Upper lobe of right lung (tissue), 1 donor: ENCODE measurements at regions of chr1 and their contacts with region 1.

Region 1: DNA sequence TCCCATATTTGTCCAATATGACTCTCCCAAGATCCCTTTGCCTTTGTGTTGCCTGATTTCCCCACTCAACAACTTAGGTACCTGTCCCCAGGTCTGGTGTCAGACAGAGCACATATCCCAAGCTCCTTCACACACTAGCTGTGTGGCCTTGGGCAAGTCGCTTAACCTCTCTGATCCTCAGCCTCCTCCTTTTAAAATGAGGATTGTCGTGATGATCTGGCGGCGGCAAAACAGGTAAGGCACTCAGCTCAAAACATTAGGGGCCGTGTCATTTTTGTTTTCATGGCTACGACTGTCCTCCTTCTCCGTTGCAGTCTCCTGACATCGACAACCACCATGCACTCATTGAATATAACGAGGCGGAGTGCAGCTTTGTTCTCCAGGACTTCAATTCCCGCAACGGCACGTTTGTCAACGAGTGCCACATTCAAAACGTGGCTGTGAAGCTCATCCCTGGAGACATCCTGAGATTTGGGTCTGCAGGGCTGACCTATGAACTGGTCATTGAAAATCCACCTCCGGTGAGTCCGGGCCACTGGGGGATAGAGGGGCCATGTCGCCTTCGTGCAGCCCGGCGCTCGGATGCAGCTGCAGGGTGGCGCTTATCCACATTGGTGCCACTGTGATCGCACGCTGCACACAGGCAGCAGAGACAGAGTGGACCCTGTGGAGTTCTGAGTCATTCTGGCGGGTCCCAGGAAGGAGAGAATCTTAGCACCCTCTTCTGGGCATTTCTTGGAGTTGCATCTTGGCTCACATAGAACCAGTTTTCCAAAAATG is 25.2 kb downstream of the FHAD1 start:
- DNase-seq: peak; percentile 72
- ATAC-seq: peak; percentile 95
- H3K4me3 ChIP-seq: no peak overlapping the region
- H3K27ac ChIP-seq: no peak overlapping the region
- H3K4me1 ChIP-seq: peaks cover 6% of the 10 kb centered on the region
- H3K27me3 ChIP-seq: peaks cover 3% of the 10 kb centered on the region
- CTCF ChIP-seq: peak; percentile 77

Region 2: GRCh38 chr1:15128520-15129313 is 143.5 kb before region 1 on chr1:
- intact Hi-C with region 1: loop called (anchors 10 kb)
- DNase-seq: peak; percentile 83
- ATAC-seq: peak; percentile 97
- H3K4me3 ChIP-seq: no peak overlapping the region
- H3K27ac ChIP-seq: no peak overlapping the region
- H3K4me1 ChIP-seq: no peaks in the 10 kb centered on the region
- H3K27me3 ChIP-seq: no peaks in the 10 kb centered on the region
- CTCF ChIP-seq: peak; percentile 92

Region 3: GRCh38 chr1:15152318-15153183 is 119.6 kb before region 1 on chr1:
- intact Hi-C with region 1: loop called (anchors 10 kb)
- DNase-seq: peak; percentile 92
- ATAC-seq: peak; percentile 76
- H3K4me3 ChIP-seq: peak overlapping the region; percentile 59
- H3K27ac ChIP-seq: peak overlapping the region; percentile 91
- H3K4me1 ChIP-seq: peaks cover 15% of the 10 kb centered on the region
- H3K27me3 ChIP-seq: no peaks in the 10 kb centered on the region
- CTCF ChIP-seq: peak; percentile 58

Region 4: DNA sequence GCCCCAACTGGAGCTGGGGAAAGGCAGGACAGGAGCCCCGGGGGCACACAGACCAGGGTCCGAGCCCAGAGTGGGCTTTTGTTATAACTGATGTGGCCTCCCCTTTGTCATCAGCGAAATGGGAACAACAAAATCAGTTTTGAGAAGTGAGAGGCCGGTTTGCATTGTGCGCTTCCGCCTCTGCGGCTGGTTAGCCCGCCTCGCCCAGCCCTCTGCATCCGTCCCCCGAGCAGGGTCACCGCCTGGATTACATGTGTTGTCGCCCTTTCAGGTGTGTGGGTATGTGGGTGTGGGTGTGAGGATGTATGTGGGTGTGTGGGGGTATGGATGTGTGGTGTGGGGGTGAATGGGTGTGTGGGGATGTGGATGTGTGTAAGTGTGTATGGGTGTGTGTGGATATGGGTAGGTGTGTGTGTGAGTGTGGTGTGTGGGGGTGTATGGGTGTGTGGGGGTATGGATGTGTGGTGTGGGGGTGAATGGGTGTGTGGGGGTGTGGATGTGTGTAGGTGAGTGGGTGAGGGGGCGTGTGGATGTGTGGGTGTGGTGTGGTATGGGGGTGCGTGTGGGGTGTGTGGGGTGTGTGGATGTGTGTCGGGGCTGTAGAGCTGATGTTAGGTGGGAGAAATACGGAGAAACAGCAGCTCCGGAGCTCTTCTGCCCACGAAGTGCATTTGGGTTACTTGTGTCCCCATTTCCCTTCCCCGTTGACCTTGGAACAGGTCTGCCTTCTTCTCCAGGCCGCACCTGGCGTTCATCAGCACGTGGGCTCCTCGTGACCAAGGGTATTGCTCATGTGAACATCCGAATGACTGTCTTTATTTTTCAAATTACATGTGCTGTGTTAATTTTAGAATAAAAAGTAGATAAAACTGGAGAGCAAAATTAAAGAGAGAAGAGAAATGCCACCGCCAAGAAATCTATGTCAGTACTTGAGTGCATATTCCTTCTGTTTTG is 42.4 kb after region 1 on chr1:
- intact Hi-C with region 1: no loop called
- DNase-seq: no peak
- ATAC-seq: peak; percentile 45
- H3K4me3 ChIP-seq: no peak overlapping the region
- H3K27ac ChIP-seq: no peak overlapping the region
- H3K4me1 ChIP-seq: no peaks in the 10 kb centered on the region
- H3K27me3 ChIP-seq: no peaks in the 10 kb centered on the region
- CTCF ChIP-seq: no peak

Region 5: DNA sequence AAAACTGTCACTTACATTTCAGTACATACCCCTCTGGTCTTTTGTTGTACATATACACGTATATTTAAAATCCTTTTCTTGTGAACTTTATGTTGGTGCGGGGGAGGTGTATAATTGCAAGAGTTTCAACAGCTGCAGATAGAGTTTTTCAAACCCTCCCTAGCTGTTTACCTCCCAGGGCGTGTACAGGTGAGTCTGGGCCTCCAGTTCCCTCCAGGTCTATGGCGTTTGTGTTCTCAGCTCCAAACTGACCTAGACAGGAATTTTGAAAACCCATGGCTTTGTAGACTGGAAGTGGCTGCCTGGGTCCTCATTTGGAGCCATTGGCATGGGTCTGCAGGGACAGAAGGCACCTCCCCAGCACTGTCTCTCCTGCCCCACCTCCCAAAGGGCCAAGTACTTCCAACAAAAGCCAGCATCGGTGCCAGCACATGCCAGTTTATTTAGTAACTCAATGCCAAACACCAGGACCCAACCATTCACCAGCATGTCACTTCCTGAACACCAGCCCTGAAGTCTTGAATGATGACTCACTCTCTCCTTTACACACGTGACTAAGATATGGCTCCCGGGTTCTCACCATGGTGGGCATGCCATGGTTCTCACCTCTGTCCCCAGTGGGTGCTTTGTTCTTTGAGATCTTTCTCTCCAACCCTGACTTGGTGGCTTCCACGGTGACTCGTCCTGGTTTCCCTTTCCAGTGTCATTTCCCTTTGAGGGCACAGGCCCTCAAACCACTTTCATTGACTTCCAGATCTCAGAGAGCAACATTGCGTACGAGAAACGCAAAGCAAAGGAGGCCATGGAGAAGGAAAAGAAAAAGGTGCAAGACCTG is 80.1 kb after region 1 on chr1:
- intact Hi-C with region 1: no loop called
- DNase-seq: no peak
- ATAC-seq: peak; percentile 61
- H3K4me3 ChIP-seq: no peak overlapping the region
- H3K27ac ChIP-seq: no peak overlapping the region
- H3K4me1 ChIP-seq: peaks cover 6% of the 10 kb centered on the region
- H3K27me3 ChIP-seq: no peaks in the 10 kb centered on the region
- CTCF ChIP-seq: no peak